ENCODE measurements at regions of chr11 and their contacts with region 1.

Region 1: GRCh38 chr11:65588199-65589054 is 7.2 kb downstream of the KCNK7 start:
- DNase-seq: peak; percentile 35 to 83 (median 75)
- ATAC-seq: peak; percentile 91
- H3K4me3 ChIP-seq: no peak overlapping the region
- H3K4me3 Mint-ChIP-seq: peak overlapping the region in 1 of 10 donors; percentile 76
- H3K27ac ChIP-seq: peak overlapping the region; percentile 43
- H3K27ac Mint-ChIP-seq: peak overlapping the region; percentile 38 to 86 (median 76)
- H3K4me1 ChIP-seq: peaks cover 11 to 16% of the 10 kb centered on the region in 2 donors
- H3K4me1 Mint-ChIP-seq: peaks cover 16 to 43% (median 21%) of the 10 kb centered on the region in 7 donors
- H3K27me3 ChIP-seq: no peaks in the 10 kb centered on the region
- H3K27me3 Mint-ChIP-seq: no peaks in the 10 kb centered on the region

Region 2: DNA sequence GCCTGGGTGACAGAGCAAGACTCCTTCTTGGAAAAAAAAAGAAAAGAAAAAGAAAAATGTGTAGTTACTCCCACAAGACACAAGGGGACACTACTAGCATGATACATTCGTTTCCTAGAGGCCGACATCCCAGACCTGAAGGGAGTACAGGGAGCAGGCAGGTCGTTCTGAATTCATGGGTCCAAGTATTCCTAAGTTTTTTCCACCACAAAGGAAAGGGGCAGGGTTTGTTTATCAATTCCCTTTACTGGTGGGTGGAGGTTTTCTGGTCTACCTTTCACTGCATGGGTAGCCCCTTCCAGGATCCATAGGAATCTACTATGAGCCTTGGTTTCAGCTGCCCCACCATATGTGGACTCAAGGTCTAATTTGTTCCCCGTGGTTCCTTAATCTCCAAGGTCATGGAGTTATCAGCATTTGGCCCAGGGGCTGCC is 222.1 kb before region 1 on chr11:
- CTCF ChIA-PET with region 1: interaction called, 6 read pairs
- POLR2A ChIA-PET with region 1: no interaction called
- intact Hi-C with region 1: loop called in 1 of 2 experiments (anchors 1 kb)
- DNase-seq: peak in 7 of 9 donors; percentile 47 to 71 (median 59)
- ATAC-seq: peak; percentile 82
- H3K4me3 ChIP-seq: no peak overlapping the region
- H3K4me3 Mint-ChIP-seq: no peak overlapping the region
- H3K27ac ChIP-seq: no peak overlapping the region
- H3K27ac Mint-ChIP-seq: no peak overlapping the region
- H3K4me1 ChIP-seq: no peaks in the 10 kb centered on the region
- H3K4me1 Mint-ChIP-seq: peaks cover 0 to 9% (median 0%) of the 10 kb centered on the region in 7 donors
- H3K27me3 ChIP-seq: no peaks in the 10 kb centered on the region
- H3K27me3 Mint-ChIP-seq: no peaks in the 10 kb centered on the region

Region 3: DNA sequence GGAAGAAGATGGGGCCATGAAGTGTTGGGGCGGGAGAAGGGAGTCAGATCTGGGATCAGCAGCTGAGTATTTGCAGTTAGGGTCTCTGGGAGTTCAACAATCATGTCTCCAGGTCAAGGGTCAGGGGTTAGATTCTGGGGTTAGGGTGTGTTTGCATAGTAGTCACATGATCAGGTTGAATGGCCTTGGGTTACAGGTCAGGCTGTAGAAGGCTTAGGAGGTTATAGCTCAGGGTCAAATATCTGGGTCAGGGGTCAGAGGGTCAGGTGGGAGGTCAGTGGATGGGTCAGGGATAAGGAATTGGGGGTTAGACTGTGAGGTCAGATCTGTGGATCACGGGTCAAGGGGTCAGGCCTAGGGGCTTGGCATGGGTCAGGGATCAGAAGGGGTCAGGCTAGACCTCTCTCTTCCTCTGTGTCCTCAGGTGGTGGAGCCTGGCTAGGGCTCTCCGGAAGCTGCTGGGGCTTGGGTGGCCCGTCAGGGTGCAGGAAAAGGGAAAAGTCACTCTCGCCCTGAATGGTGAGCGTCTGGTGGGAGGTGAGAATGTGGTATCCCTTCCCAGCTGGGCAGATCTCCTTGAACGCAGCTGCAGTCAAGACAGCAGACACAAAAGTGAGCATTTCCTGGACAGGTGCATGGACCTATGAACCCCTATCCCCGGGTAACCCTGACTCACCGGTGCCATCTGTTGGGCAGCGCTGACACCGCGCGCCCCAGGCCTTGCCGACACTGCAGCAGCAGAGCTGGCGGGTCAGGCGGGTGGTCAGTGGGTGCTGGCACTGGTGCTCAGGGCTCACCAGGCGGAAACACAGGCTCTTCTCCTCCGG is 36.6 kb before region 1 on chr11:
- CTCF ChIA-PET with region 1: interaction called, 7 read pairs
- POLR2A ChIA-PET with region 1: interaction called, 66 read pairs
- intact Hi-C with region 1: loop called in 1 of 2 experiments (anchors 1 kb)
- DNase-seq: peak in 6 of 9 donors; percentile 51 to 62 (median 56)
- ATAC-seq: peak; percentile 53
- H3K4me3 ChIP-seq: no peak overlapping the region
- H3K4me3 Mint-ChIP-seq: peak overlapping the region; percentile 18 to 98 (median 74)
- H3K27ac ChIP-seq: peak overlapping the region; percentile 31
- H3K27ac Mint-ChIP-seq: peak overlapping the region; percentile 71 to 93 (median 87)
- H3K4me1 ChIP-seq: peaks cover 35 to 78% of the 10 kb centered on the region in 2 donors
- H3K4me1 Mint-ChIP-seq: peaks cover 50 to 86% (median 74%) of the 10 kb centered on the region in 7 donors
- H3K27me3 ChIP-seq: no peaks in the 10 kb centered on the region
- H3K27me3 Mint-ChIP-seq: no peaks in the 10 kb centered on the region

Region 4: GRCh38 chr11:66203847-66204246 is 615.4 kb after region 1 on chr11:
- CTCF ChIA-PET with region 1: no interaction called
- POLR2A ChIA-PET with region 1: no interaction called
- intact Hi-C with region 1: no loop called
- DNase-seq: no peak
- ATAC-seq: no peak
- H3K4me3 ChIP-seq: no peak overlapping the region
- H3K4me3 Mint-ChIP-seq: no peak overlapping the region
- H3K27ac ChIP-seq: no peak overlapping the region
- H3K27ac Mint-ChIP-seq: peak overlapping the region in 4 of 9 donors; percentile 32 to 53 (median 46)
- H3K4me1 ChIP-seq: no peaks in the 10 kb centered on the region
- H3K4me1 Mint-ChIP-seq: peaks cover under 1 to 15% (median 8%) of the 10 kb centered on the region in 7 donors
- H3K27me3 ChIP-seq: no peaks in the 10 kb centered on the region
- H3K27me3 Mint-ChIP-seq: no peaks in the 10 kb centered on the region